ENCODE measurements at regions of chr17 and their contacts with region 1.

Region 1: DNA sequence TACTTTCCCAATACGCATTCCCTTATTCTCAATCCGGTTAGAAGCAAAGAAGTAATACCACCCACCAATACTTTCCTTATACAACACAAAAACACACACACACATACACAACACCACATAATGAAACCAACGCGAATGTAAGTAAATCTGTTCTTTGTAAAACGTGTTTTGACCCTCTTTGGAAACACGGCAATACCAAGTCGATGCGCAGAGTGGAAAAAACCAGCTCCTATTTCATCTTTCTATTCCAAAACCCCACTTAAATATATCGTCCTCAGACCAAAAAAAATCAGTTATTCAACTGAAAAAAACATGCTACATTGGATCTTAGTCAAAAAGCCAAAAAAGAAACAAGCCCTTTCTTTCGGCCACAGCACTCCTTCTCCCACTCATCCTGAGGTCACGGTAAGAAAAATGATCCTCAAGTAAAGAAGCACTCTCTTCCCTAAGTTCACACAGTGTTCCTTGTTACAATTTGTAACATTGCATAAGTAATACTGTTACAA is 31.0 kb upstream of the ARL4D start:
- DNase-seq: peak; percentile 65
- H3K4me3 Mint-ChIP-seq: peak overlapping the region; percentile 94
- H3K27ac Mint-ChIP-seq: peak overlapping the region; percentile 99
- H3K4me1 Mint-ChIP-seq: peaks cover 51% of the 10 kb centered on the region
- H3K27me3 Mint-ChIP-seq: peaks cover 4% of the 10 kb centered on the region

Region 2: GRCh38 chr17:43388359-43389045 is 20.7 kb after region 1 on chr17:
- CTCF ChIA-PET with region 1: interaction called, 16 read pairs
- DNase-seq: peak; percentile 94
- H3K4me3 Mint-ChIP-seq: peak overlapping the region; percentile 89
- H3K27ac Mint-ChIP-seq: peak overlapping the region; percentile 98
- H3K4me1 Mint-ChIP-seq: peaks cover 23% of the 10 kb centered on the region
- H3K27me3 Mint-ChIP-seq: peaks cover under 1% of the 10 kb centered on the region

Region 3: DNA sequence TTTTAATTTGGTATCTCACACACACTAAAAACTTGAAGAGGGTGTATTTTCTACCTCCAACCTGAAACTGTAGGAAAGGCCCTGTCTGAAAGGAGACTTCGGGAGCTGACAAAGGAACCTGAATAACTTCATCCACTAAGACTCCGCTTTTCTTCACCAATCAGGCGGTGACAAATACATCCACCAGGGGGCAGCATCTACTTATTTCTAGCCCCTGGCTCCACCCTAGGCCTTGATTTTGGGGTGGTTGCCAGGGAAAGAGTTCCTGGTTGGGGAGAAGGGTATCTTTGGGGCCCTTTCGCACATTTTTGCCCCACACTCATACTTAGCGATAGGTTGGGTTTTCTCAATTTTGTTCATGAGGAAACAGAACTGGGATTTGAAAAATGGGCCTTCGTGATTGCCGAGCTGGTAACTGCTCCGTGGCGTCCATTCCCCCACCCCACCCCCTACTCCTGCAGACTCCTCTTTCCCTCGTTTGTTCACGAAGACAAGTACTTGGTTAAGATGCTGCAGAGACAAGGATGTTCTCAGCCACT is 26.2 kb after region 1 on chr17:
- CTCF ChIA-PET with region 1: interaction called, 11 read pairs
- DNase-seq: peak; percentile 94
- H3K4me3 Mint-ChIP-seq: no peak overlapping the region
- H3K27ac Mint-ChIP-seq: peak overlapping the region; percentile 2
- H3K4me1 Mint-ChIP-seq: peaks cover 57% of the 10 kb centered on the region
- H3K27me3 Mint-ChIP-seq: no peaks in the 10 kb centered on the region

Region 4: GRCh38 chr17:43483674-43484372 is 116.0 kb after region 1 on chr17 and contains the start of gene DHX8:
- CTCF ChIA-PET with region 1: interaction called, 26 read pairs
- DNase-seq: peak; percentile 98
- H3K4me3 Mint-ChIP-seq: peak within 1 kb of the TSS; percentile 100
- H3K27ac Mint-ChIP-seq: peak within 1 kb of the TSS; percentile 99
- H3K4me1 Mint-ChIP-seq: peaks cover 41% of the 10 kb centered on the region
- H3K27me3 Mint-ChIP-seq: peaks cover 6% of the 10 kb centered on the region